ENCODE measurements at regions of chr6 and their contacts with region 1.

Region 1: GRCh38 chr6:137313928-137314855 is 95.0 kb upstream of the IFNGR1 start:
- DNase-seq: peak; percentile 73
- ATAC-seq: peak; percentile 64
- H3K4me3 Mint-ChIP-seq: no peak overlapping the region
- H3K27ac Mint-ChIP-seq: no peak overlapping the region
- H3K4me1 Mint-ChIP-seq: peaks cover 3% of the 10 kb centered on the region
- H3K27me3 Mint-ChIP-seq: peaks cover 9% of the 10 kb centered on the region

Region 2: GRCh38 chr6:137094411-137095008 is 219.7 kb before region 1 on chr6:
- CTCF ChIA-PET with region 1: interaction called, 36 read pairs
- DNase-seq: peak; percentile 73
- ATAC-seq: peak; percentile 76
- H3K4me3 Mint-ChIP-seq: no peak overlapping the region
- H3K27ac Mint-ChIP-seq: no peak overlapping the region
- H3K4me1 Mint-ChIP-seq: peaks cover 32% of the 10 kb centered on the region
- H3K27me3 Mint-ChIP-seq: peaks cover 4% of the 10 kb centered on the region

Region 3: GRCh38 chr6:137271245-137272183 is 42.7 kb before region 1 on chr6:
- CTCF ChIA-PET with region 1: interaction called, 24 read pairs
- DNase-seq: no peak
- ATAC-seq: peak; percentile 49
- H3K4me3 Mint-ChIP-seq: no peak overlapping the region
- H3K27ac Mint-ChIP-seq: no peak overlapping the region
- H3K4me1 Mint-ChIP-seq: peaks cover 10% of the 10 kb centered on the region
- H3K27me3 Mint-ChIP-seq: peaks cover 29% of the 10 kb centered on the region

Region 4: DNA sequence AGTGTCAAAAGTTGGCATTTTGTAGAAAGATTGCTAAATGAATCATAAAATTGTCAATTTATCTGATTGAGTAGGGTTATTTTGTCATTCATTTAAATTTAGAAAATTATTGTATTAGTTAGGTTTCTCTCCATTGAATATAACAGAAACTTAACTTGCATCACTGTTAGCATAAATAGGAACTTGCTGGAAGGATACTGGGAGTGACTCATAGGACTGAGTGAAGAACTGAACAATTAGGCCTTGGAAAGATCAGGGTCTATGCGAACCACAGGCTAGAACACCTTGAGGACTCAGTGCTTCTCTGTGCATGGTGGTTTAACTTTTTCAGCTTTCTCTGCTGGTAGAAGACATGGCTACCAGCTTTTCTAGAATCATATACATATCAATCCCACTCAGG is 27.3 kb before region 1 on chr6:
- CTCF ChIA-PET with region 1: interaction called, 15 read pairs
- DNase-seq: no peak
- ATAC-seq: no peak
- H3K4me3 Mint-ChIP-seq: no peak overlapping the region
- H3K27ac Mint-ChIP-seq: no peak overlapping the region
- H3K4me1 Mint-ChIP-seq: peaks cover 16% of the 10 kb centered on the region
- H3K27me3 Mint-ChIP-seq: peaks cover 20% of the 10 kb centered on the region

Measured in activated CD8-positive, alpha-beta memory T cell treated with anti-CD3 and anti-CD28 coated beads, Interleukin-2, amount 10 ng/mL, durations not matched to agents 7 days and 5 days (primary cell).